Endothelial cell of umbilical vein (primary cell): ENCODE measurements at regions of chr2 and their contacts with region 1.

Region 1: DNA sequence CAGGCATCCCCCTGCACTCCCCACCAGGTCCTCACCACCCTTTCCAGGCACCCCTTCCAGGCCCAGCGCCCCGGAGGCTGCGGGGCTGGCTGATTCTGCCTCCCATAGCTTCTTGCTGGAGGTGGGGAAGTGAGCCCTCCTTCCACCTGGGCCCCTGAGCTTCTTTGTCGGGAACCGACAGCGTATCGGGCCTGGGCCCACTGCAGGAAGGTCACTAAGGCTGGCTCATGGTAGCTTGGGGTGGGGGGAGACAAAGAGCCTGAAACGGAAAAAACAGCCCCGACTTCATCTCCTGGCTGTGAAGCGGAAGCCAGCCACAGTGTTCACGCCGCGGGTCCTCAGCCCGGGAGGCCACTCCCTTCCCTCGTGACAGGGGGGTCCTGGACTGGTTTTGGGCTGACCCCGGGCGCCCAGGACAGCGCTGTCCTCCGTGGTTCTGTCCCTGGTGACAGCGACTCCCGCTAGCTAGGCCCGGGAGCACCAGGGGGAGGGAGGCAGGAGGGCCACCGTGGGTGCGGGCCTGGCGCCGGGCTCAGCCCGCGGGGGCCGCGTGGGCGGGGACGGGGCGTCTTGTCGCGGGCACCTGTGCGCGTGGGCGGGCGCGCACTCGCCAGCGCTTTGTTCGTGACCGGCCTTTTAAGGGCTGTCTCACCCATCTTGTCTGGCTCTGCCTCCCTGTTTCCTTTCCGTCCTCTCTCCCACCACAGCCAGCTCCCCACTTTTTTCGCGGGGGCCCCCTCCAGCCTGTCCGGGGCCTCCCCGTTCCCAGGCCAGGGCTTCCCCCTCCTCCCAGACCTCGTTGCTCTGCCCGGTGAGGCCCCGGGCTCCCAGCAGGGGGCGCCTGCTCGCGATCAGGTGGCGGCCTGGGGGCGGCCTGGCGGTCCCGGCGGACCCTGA is 64.9 kb downstream of the DNMT3A start:
- DNase-seq: peak; percentile 61
- H3K4me3 ChIP-seq: peak overlapping the region in 1 of 3 experiments; percentile 9
- H3K27ac ChIP-seq: peak overlapping the region; percentile 25
- H3K4me1 ChIP-seq: peaks cover 15% of the 10 kb centered on the region
- H3K27me3 ChIP-seq: no peaks in the 10 kb centered on the region
- CTCF ChIP-seq: peak; percentile 83 to 91
- POLR2A ChIP-seq: no peak

Region 2: GRCh38 chr2:25252281-25253105 is 24.3 kb before region 1 on chr2:
- CTCF ChIA-PET with region 1: interaction called, 10 read pairs
- POLR2A ChIA-PET with region 1: no interaction called
- dilution Hi-C with region 1: no loop called
- intact Hi-C with region 1: no loop called
- DNase-seq: peak; percentile 82
- H3K4me3 ChIP-seq: peak overlapping the region in 2 of 3 experiments; percentile 19 to 59
- H3K27ac ChIP-seq: peak overlapping the region; percentile 74
- H3K4me1 ChIP-seq: peaks cover 21% of the 10 kb centered on the region
- H3K27me3 ChIP-seq: no peaks in the 10 kb centered on the region
- CTCF ChIP-seq: no peak
- POLR2A ChIP-seq: no peak

Region 3: DNA sequence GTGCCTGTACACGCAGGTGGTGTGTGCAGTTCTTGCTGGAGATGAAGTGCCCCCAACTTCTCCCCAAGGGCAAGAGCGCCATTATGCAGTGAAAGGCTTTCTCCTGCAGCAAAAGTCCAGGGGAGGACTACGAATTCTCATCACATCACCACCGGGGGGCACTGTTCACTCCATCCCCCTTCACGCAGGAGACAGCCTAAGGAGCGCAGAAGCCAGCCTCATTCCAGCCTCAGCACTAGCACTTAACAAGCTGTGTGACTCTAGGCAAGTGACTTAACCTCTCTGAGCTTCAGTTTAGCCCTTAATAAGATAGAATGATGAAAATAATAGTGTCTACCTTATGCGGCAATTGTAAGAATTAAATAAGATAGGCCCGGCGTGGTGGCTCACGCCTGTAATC is 32.6 kb after region 1 on chr2:
- CTCF ChIA-PET with region 1: interaction called, 22 read pairs
- POLR2A ChIA-PET with region 1: no interaction called
- dilution Hi-C with region 1: no loop called
- intact Hi-C with region 1: no loop called
- DNase-seq: peak; percentile 57
- H3K4me3 ChIP-seq: no peak overlapping the region
- H3K27ac ChIP-seq: no peak overlapping the region
- H3K4me1 ChIP-seq: no peaks in the 10 kb centered on the region
- H3K27me3 ChIP-seq: no peaks in the 10 kb centered on the region
- CTCF ChIP-seq: peak; percentile 53 to 64
- POLR2A ChIP-seq: no peak

Region 4: DNA sequence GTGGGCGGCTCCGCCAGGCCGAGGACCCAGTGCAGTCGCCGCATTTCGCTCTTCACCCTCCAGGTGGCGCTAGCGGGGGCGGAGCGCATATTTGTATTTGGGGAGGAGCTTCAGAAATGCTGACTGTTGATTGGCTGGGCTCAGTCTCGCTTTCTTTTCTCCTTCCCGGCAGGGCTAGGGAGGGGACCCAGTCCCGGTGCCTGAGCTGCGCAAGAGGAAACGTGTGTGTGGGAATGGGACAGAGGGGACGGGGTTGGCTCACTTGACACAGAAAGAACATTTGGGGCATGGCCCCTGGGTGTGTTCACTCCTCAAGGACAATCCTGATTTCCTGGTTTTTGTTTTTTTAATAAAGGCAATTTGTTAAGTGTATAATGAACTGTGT is 85.2 kb after region 1 on chr2:
- CTCF ChIA-PET with region 1: interaction called, 15 read pairs
- POLR2A ChIA-PET with region 1: no interaction called
- dilution Hi-C with region 1: no loop called
- intact Hi-C with region 1: no loop called
- DNase-seq: peak; percentile 93
- H3K4me3 ChIP-seq: peak overlapping the region in 1 of 3 experiments; percentile 34
- H3K27ac ChIP-seq: no peak overlapping the region
- H3K4me1 ChIP-seq: peaks cover 4% of the 10 kb centered on the region
- H3K27me3 ChIP-seq: no peaks in the 10 kb centered on the region
- CTCF ChIP-seq: peak; percentile 96 to 97
- POLR2A ChIP-seq: peak; percentile 68

Region 5: GRCh38 chr2:25521665-25522387 is 245.0 kb after region 1 on chr2:
- CTCF ChIA-PET with region 1: no interaction called
- POLR2A ChIA-PET with region 1: no interaction called
- dilution Hi-C with region 1: no loop called
- intact Hi-C with region 1: loop called (anchors 1 kb)
- DNase-seq: peak; percentile 86
- H3K4me3 ChIP-seq: no peak overlapping the region
- H3K27ac ChIP-seq: no peak overlapping the region
- H3K4me1 ChIP-seq: peaks cover 7% of the 10 kb centered on the region
- H3K27me3 ChIP-seq: no peaks in the 10 kb centered on the region
- CTCF ChIP-seq: peak; percentile 55 to 61
- POLR2A ChIP-seq: no peak